ENCODE measurements at regions of chr5 and their contacts with region 1.

Region 1: DNA sequence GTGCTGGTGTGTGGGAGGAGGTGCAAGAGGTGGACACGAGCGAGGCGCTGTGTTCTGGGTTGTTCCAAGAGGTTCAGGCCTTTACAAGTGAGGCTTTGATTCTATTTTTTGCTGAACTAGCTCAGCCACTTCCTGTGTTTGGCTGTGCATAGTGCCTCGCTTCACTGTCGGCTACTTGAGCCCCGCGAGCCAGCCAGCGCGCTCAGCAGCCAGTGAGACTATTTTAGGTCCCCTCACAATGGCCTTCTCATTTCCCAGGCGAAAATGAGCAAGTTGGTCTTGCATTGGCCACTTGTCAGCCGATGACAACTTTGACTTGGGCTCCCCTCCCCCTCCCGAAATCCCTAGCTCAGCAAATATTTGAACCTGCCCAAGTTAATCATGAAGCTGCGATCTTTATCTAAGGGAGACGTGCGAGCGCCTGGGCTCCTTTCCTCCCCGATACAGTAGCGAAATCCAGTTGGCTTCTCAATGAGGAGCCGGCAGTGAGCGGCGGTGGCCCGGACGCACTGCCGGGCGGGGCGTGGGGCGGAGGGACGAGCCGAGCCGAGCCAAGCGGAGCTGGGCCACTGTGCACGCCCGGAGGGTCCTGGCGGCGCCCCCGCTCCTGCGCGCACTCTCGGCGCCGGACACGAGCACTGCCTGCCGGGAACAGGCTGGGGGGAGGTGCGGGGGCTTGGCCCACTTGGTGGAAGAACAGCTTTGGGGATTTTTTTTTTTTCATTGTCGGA is 72.6 kb downstream of the PIK3R1 start:
- DNase-seq: peak; percentile 75
- CTCF ChIP-seq: no peak

Region 2: DNA sequence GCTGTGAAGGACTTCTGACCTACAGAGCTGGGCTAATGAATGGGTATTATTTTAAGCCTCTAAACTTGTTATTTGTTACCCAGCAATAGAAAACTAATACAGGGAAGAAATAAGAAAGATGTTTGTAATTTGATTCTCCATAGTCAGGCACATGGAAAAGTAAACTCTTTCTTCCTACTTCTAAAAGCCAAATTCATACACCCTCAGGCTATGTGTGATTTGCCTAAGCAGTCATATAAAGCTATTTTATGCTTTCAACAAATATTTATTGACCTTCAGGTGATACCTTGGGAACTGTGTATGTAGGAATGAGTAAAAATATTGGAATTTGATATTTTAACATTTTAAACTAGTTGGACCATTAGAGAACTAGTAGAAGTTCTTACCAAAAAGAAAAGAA is 191.1 kb before region 1 on chr5:
- in situ Hi-C with region 1: no loop called
- DNase-seq: no peak
- CTCF ChIP-seq: no peak

Region 3: DNA sequence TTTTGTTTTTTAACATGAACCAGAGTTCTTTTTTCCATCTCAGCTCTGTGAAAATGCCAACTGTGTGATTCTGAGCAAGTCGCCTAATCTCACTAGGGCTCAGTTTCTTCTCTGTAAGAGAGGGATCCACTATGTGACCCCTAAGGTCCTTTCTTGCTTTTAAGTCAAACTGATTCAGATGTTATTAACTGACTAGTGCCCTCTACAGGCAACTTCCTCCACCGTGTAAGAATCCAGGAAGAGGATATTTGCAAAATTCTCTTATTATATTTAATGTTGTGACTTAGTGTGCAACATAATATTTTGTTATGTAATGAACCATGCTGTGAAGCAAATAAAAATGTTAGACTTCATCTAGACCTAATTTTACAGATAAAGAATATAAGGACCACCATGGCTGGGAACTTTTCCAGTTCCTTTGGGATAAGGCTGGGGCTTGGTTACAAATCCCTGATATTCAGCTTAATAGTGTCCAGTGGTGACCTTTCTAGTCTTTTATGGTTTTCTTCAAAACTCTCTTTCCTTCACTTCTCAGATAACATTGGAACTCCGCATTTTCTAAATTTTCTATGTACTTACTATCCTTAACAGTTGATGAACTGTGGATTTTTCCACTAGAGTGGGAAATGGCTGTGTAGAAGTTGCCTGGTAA is 172.1 kb after region 1 on chr5:
- in situ Hi-C with region 1: loop called (anchors 5 kb)
- DNase-seq: peak; percentile 38
- CTCF ChIP-seq: peak; percentile 47

Region 4: GRCh38 chr5:68661237-68661636 is 373.1 kb after region 1 on chr5:
- in situ Hi-C with region 1: loop called (anchors 25 kb)
- DNase-seq: peak; percentile 31
- CTCF ChIP-seq: peak; percentile 16

Measured in GM13976 (cell line).